ENCODE measurements at regions of chr11 and their contacts with region 1.

Region 1: DNA sequence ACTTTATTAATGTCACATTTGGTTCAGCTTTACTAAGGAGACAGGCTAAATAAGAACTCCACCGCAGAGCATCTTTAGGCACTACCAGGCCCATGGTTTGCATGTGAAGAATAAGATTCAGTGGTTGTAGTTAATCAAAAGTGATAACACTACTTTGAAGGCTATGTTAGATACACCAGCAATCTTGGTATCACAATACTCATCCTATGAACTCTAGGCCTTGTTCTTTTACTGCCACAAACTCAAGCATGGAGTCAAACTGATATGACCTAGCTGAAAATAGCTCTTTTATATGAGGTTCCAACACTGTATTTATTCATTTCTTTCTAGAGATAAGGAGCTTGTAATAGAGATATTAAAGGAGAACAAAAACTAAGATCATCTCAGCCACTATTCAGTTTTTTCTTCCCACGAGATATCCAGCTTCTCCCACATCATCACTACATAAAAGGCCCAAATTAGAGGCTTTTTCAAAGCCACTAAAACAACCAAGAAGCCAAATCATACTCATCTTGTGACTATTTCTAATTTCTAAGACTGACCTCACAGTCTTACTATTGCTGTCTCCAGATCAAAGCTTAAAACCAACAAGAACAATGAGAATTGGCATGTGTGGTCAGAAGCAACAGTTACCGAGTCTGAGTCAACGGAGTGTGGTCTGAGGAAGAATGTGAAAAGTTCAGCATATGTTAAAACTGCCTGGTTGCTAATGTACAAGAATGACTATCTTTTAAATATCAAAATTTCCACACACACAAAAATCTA is 25.1 kb upstream of the GUCY1A2 start:
- DNase-seq: no peak
- H3K4me3 ChIP-seq: no peak overlapping the region
- H3K27ac ChIP-seq: no peak overlapping the region
- H3K4me1 ChIP-seq: no peaks in the 10 kb centered on the region
- H3K27me3 ChIP-seq: no peaks in the 10 kb centered on the region
- CTCF ChIP-seq: no peak
- POLR2A ChIP-seq: no peak

Region 2: GRCh38 chr11:106683435-106683834 is 360.0 kb before region 1 on chr11:
- intact Hi-C with region 1: no loop called
- DNase-seq: no peak
- H3K4me3 ChIP-seq: no peak overlapping the region
- H3K27ac ChIP-seq: no peak overlapping the region
- H3K4me1 ChIP-seq: no peaks in the 10 kb centered on the region
- H3K27me3 ChIP-seq: no peaks in the 10 kb centered on the region
- CTCF ChIP-seq: no peak
- POLR2A ChIP-seq: no peak

Region 3: GRCh38 chr11:106724293-106724892 is 319.0 kb before region 1 on chr11:
- intact Hi-C with region 1: loop called in 1 of 2 experiments (anchors 10 kb)
- DNase-seq: no peak
- H3K4me3 ChIP-seq: no peak overlapping the region
- H3K27ac ChIP-seq: no peak overlapping the region
- H3K4me1 ChIP-seq: peaks cover 0 to 4% of the 10 kb centered on the region in 2 donors
- H3K27me3 ChIP-seq: no peaks in the 10 kb centered on the region
- CTCF ChIP-seq: no peak
- POLR2A ChIP-seq: no peak

Region 4: GRCh38 chr11:106840947-106841346 is 202.5 kb before region 1 on chr11:
- intact Hi-C with region 1: no loop called
- DNase-seq: no peak
- H3K4me3 ChIP-seq: no peak overlapping the region
- H3K27ac ChIP-seq: no peak overlapping the region
- H3K4me1 ChIP-seq: no peaks in the 10 kb centered on the region
- H3K27me3 ChIP-seq: no peaks in the 10 kb centered on the region
- CTCF ChIP-seq: no peak
- POLR2A ChIP-seq: no peak

Region 5: DNA sequence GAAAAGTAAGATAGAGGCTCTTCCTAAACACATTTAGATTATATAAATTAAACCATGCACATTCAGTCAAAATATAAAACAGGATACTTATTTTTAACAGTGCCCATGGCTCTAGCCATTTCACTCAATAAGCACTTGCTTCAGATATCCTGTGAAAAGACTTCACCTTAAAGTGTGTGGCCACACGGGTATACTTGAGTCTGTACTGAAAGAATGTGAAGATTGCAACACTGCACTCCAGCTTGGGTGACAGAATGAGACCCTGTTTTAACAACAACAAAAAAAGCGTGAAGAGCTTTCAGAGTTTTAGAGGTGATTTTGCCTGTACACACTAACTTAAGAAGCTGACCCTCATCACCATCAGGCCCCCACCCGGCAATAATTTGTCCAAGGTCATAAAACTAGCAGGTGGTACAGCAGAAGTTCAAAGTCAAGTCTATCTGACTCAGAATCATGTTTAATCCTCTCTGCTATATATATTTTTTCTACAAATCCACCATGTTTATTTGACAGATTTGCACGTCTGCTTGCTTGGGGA is 178.4 kb after region 1 on chr11:
- intact Hi-C with region 1: no loop called
- DNase-seq: no peak
- H3K4me3 ChIP-seq: no peak overlapping the region
- H3K27ac ChIP-seq: no peak overlapping the region
- H3K4me1 ChIP-seq: peaks cover 6 to 13% of the 10 kb centered on the region in 2 donors
- H3K27me3 ChIP-seq: no peaks in the 10 kb centered on the region
- CTCF ChIP-seq: no peak
- POLR2A ChIP-seq: no peak

Measured in adrenal gland (tissue), 19 donors.